Activated T-helper 1 cell treated with anti-CD3 and anti-CD28 coated beads, Interleukin-12 subunit alpha, Interleukin-12 subunit beta, Interleukin-2, Interleukin-4 antibody, amounts not matched to agents 30 ng/mL and 10 ng/mL and 1 ng/mL, durations not matched to agents 14 hours and 24 hours and 36 hours (primary cell): ENCODE measurements at regions of chr16 and their contacts with region 1.

Region 1: DNA sequence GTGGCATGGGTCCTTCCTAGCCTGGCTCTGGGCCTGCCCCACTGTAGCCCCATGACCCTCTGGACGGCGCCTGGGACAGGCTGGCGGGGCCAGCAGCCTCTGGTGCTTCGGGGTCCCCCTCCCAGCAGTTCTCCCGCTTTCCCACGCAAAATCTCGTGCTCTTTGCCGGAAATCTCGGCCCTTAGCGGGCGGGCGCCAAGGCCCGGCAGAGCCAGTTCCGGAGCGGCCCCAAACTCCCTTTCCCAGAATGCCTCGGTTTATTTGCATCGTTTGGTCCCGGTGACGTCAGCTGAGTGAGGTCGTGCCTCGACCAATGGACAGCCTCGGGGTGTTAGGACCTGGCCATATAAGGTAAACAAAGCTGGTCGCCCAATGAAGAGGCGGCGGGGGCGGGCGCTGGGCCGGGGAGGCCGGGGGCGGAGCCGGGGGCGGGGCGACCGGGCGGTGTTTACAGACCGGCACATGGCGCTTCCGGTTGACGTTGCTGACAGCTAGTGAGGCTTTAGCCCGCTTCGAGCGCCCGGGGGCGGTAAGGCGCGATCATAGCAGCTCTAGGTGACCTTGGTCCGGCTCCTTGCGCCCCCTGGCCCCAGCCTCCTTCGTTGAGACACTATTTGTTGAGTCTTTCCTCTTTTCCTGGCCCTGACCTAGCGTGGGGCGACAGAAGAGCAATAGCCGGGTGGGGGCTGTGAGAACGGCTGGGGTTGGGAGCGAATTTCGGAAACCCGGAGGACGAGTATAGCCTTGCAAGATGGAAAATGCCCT is 1.5 kb upstream of the UBALD1 start:
- DNase-seq: peak; percentile 98
- H3K4me3 Mint-ChIP-seq: peak overlapping the region; percentile 95
- H3K27ac Mint-ChIP-seq: peak overlapping the region; percentile 98
- H3K4me1 Mint-ChIP-seq: peaks cover 16% of the 10 kb centered on the region
- H3K27me3 Mint-ChIP-seq: peaks cover 2% of the 10 kb centered on the region

Region 2: DNA sequence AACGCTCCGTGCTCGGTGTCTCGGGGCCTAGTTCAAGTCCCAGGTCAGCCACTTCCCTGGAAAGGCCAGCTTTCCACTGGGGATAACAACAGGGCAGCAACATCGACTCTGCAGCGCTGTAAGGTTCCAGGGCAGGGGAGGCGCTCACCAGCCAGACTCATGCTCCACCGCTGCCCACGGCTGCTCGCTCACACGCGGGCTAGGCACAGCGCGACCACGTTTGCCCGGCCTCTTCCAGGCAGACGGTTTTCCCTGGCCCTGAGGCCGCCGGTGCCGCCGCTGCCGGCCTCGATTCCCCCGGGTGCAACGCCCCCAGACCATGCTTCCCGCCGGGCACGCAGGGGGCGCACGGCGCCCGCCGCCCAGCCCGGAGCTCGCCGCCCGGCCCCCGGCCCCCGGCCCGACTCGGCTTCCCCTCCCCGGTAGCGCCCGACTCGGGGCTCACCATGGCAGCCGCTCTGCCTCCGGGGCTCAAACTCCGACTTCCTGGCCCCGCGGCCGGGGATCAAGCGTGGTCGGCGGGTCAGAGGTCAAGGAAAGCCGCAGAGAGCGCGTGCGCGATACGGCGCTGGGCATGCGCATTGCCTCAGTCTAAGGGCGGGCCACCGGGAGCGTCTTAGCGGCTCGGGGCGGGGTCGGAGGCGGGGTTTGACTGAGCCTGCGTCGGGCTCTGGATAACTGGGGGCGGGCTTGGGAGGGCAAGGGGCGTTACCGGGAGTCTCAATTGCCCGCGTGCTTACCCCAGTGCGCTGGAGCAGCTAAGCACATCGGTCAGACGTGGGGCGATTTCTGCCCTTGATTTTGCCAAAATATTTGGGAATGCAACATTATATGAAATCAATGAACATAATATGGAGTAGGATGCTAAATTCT is 265.2 kb before region 1 on chr16 and contains the start of gene PAM16:
- intact Hi-C with region 1: loop called (anchors 2 kb)
- DNase-seq: peak; percentile 99
- H3K4me3 Mint-ChIP-seq: peak within 1 kb of the TSS; percentile 97
- H3K27ac Mint-ChIP-seq: peak within 1 kb of the TSS; percentile 93
- H3K4me1 Mint-ChIP-seq: peaks cover 13% of the 10 kb centered on the region
- H3K27me3 Mint-ChIP-seq: no peaks in the 10 kb centered on the region
- total RNA-seq, gene PAM16: 91.5 and 106 TPM in 2 replicates

Region 3: DNA sequence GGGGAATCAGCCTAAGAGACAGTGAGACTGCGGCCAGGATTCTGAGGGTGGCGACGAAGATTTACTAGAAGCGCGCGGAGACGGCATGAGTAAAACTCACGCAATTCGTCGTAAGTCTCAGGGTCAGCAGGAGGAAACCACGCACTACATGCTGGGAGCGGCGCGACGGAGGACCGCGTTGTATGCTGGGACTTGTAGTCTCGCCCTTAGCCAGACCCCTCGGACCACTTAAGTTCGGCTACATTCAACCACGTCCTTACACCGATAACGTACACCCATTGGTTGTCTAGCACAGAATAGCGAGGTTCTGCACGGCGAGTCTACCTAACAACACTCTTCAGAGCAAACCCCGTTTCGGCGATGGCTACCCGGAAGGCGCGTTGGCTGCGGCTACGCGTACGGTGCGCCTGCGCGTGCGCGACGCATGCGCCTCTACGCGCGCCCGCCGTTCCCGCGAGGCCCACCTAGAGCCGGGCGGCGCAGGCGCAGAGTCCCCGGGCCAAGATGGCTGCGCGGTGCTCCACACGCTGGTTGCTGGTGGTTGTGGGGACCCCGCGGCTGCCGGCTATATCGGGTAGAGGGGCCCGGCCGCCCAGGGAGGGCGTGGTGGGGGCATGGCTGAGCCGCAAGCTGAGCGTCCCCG is 190.7 kb before region 1 on chr16 and contains the start of gene DNAJA3:
- intact Hi-C with region 1: loop called (anchors 1 kb)
- DNase-seq: peak; percentile 91
- H3K4me3 Mint-ChIP-seq: peak within 1 kb of the TSS; percentile 98
- H3K27ac Mint-ChIP-seq: peak within 1 kb of the TSS; percentile 100
- H3K4me1 Mint-ChIP-seq: peaks cover 31% of the 10 kb centered on the region
- H3K27me3 Mint-ChIP-seq: peaks cover 3% of the 10 kb centered on the region
- total RNA-seq, gene DNAJA3: 103 and 107 TPM in 2 replicates

Region 4: DNA sequence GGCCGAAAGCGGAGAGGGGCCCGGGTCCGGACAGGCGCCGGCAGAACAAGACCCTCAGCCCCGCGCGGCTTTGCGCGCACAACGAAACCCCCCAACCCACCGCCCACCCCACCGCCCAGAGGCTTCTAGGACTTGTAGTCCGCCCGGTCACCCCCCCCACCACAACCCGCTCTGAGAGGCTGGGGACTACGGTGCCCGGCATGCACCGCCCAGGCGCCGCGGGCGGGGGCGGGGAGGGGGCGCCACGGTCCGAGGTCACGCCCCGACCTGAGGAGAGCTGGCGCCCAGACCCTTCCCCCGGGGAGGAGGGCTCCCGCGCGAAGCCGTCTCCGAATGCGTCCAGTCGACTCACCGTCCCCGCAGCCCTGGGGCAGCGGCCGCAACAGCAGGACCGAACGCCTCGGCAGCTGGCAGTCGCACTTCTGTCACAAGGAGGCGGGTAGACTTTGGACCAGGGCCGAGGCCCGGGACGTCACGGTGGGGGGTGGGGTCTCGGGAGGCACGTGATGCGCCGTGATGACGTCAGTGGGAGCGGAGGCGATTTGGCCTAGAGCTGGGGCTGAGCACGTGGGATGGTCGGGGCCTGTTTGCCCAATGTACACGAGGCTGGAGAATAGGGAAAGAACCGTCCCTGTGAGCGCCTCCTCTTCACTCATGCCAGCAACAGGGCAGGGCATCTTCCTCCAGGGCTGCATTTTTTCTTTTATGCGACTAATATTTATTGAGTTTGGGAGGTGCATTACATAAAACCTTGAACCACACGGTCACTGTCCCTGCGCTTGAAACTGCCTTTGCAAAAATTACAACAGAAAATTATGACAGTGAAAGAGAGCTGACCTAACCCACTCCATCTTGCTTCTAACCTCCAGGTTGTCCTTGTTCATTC is 77.6 kb before region 1 on chr16 and contains the start of gene CDIP1:
- intact Hi-C with region 1: loop called (anchors 2 kb)
- DNase-seq: peak; percentile 86
- H3K4me3 Mint-ChIP-seq: peak within 1 kb of the TSS; percentile 80
- H3K27ac Mint-ChIP-seq: peak within 1 kb of the TSS; percentile 82
- H3K4me1 Mint-ChIP-seq: peaks cover 40% of the 10 kb centered on the region
- H3K27me3 Mint-ChIP-seq: peaks cover 5% of the 10 kb centered on the region
- total RNA-seq, gene CDIP1: 61.6 and 62.7 TPM in 2 replicates

Region 5: GRCh38 chr16:4734063-4734729 is 118.0 kb after region 1 on chr16 and contains the starts of genes ANKS3 and DNAAF8:
- intact Hi-C with region 1: loop called (anchors 1 kb)
- DNase-seq: peak; percentile 81
- H3K4me3 Mint-ChIP-seq: peak within 1 kb of the TSS; percentile 88
- H3K27ac Mint-ChIP-seq: peak within 1 kb of the TSS; percentile 84
- H3K4me1 Mint-ChIP-seq: peaks cover 26% of the 10 kb centered on the region
- H3K27me3 Mint-ChIP-seq: no peaks in the 10 kb centered on the region
- total RNA-seq, gene ANKS3: 21.1 and 25.8 TPM in 2 replicates
- total RNA-seq, gene DNAAF8: not detected in 2 replicates

Region 6: GRCh38 chr16:4802659-4803287 is 186.5 kb after region 1 on chr16:
- intact Hi-C with region 1: loop called (anchors 1 kb)
- DNase-seq: peak; percentile 89
- H3K4me3 Mint-ChIP-seq: peak overlapping the region; percentile 80
- H3K27ac Mint-ChIP-seq: no peak overlapping the region
- H3K4me1 Mint-ChIP-seq: peaks cover 9% of the 10 kb centered on the region
- H3K27me3 Mint-ChIP-seq: no peaks in the 10 kb centered on the region